CD8-positive, alpha-beta T cell (primary cell): ENCODE measurements at regions of chr6 and their contacts with region 1.

Region 1: DNA sequence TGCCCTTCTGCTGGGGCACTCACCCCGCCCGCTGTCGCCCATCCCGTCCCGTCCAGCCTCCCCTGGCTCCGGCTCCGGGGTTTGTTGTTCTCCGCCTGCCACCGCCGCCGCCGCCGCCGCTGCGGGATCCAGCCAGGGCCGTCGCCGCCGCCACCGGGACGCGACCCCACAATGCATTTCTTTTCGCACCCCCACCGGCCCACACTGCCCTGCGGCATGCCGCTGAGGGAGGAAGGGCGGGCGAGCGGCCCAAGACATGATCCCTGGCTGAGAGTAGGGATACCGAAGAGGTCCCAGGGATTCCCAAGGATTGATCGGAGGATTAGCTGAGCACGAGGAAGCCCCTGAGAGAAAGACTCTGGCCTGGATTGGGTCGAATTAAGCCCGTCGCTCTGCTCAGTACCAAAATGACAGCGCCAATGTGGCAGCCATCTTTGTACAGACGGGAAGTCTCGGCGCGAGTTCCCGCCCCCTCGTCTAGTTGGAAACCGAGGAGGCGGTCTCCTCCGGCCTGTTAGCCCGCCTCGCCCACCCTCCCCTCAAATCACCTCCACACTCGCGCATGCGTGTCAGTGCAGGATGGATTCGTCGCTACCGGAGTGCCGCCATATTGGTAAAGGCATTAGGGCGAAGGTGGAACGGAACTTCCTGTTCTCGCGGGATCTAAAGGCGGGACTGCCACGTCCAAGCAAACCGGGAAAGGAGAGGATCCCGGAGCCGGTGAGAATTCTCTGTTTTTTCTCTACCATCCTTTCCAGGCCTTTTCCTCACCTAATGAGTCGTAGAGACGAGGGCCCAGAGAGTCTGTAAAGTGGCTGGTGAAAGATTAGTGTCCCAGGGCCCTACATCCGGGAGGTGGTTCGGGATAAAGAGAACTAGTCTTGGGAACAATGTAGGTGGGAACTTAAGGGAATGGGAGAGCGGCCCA is at the starts of genes RXRB and SLC39A7:
- DNase-seq: peak; percentile 97 to 100 (median 99)
- ATAC-seq: peak; percentile 75
- H3K4me3 ChIP-seq: peak within 1 kb of the TSS; percentile 77 to 85
- H3K4me3 Mint-ChIP-seq: peak within 1 kb of the TSS; percentile 98
- H3K27ac ChIP-seq: peak within 1 kb of the TSS; percentile 89 to 94
- H3K27ac Mint-ChIP-seq: peak within 1 kb of the TSS; percentile 99
- H3K4me1 ChIP-seq: peaks cover 57% of the 10 kb centered on the region
- H3K4me1 Mint-ChIP-seq: peaks cover 78% of the 10 kb centered on the region
- H3K27me3 ChIP-seq: no peaks in the 10 kb centered on the region
- H3K27me3 Mint-ChIP-seq: no peaks in the 10 kb centered on the region
- CTCF ChIP-seq: no peak
- total RNA-seq, gene RXRB: 39.2 to 40.0 TPM
- total RNA-seq, gene SLC39A7: 9.7 to 11.0 TPM

Region 2: GRCh38 chr6:32195652-32195901 is 1004.9 kb before region 1 on chr6:
- CTCF ChIA-PET with region 1: no interaction called
- POLR2A ChIA-PET with region 1: no interaction called
- intact Hi-C with region 1: loop called in 1 of 2 experiments (anchors 10 kb)
- DNase-seq: peak; percentile 99 to 100 (median 100)
- ATAC-seq: peak; percentile 80
- H3K4me3 ChIP-seq: peak overlapping the region; percentile 85 to 87
- H3K4me3 Mint-ChIP-seq: peak overlapping the region; percentile 90
- H3K27ac ChIP-seq: peak overlapping the region; percentile 94 to 97
- H3K27ac Mint-ChIP-seq: peak overlapping the region; percentile 95
- H3K4me1 ChIP-seq: peaks cover 33% of the 10 kb centered on the region
- H3K4me1 Mint-ChIP-seq: peaks cover 35% of the 10 kb centered on the region
- H3K27me3 ChIP-seq: no peaks in the 10 kb centered on the region
- H3K27me3 Mint-ChIP-seq: no peaks in the 10 kb centered on the region
- CTCF ChIP-seq: peak; percentile 10

Region 3: DNA sequence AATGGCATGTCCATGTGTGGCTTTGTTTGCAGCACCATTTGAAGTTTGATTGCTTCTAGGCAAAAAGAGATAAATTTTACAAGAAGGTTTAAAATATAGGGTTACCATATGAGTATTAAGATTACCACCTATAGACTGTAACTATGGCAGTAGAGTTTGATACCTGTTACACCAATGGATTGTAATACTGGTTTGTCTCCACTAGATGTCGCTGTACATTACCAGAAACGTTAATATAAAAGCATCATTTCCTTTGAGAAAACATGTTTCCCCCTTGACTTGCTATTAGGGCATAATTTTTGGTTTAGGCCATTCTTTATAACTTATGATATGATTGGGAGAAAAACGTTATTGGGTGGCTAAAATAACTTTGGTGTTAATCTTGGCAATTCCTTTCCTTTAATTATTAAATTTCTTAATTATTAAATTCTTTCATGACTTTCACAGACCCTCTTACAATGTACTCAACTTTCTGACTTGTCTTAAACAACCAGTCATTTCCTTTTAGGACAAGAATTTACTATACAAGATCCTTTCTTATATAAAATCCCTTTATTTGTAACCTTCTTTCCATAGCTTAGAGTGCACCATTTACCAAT is 81.9 kb before region 1 on chr6:
- CTCF ChIA-PET with region 1: interaction called, 5 read pairs
- POLR2A ChIA-PET with region 1: no interaction called
- intact Hi-C with region 1: loop called in 1 of 2 experiments (anchors 5 kb)
- DNase-seq: peak in 3 of 9 experiments; percentile 30 to 83 (median 76)
- ATAC-seq: peak; percentile 84
- H3K4me3 ChIP-seq: no peak overlapping the region
- H3K4me3 Mint-ChIP-seq: no peak overlapping the region
- H3K27ac ChIP-seq: no peak overlapping the region
- H3K27ac Mint-ChIP-seq: no peak overlapping the region
- H3K4me1 ChIP-seq: no peaks in the 10 kb centered on the region
- H3K4me1 Mint-ChIP-seq: peaks cover 18% of the 10 kb centered on the region
- H3K27me3 ChIP-seq: peaks cover 20 to 22% of the 10 kb centered on the region in 2 experiments
- H3K27me3 Mint-ChIP-seq: peaks cover 46% of the 10 kb centered on the region
- CTCF ChIP-seq: peak; percentile 65

Region 4: GRCh38 chr6:33183071-33183683 is 17.3 kb before region 1 on chr6:
- CTCF ChIA-PET with region 1: interaction called, 5 read pairs
- POLR2A ChIA-PET with region 1: interaction called, 5 read pairs
- intact Hi-C with region 1: loop called in 1 of 2 experiments (anchors 1 kb)
- DNase-seq: peak in 2 of 9 experiments; percentile 34 to 53
- ATAC-seq: no peak
- H3K4me3 ChIP-seq: peak overlapping the region in 1 of 2 experiments; percentile 6
- H3K4me3 Mint-ChIP-seq: peak overlapping the region; percentile 52
- H3K27ac ChIP-seq: peak overlapping the region in 1 of 2 experiments; percentile 62
- H3K27ac Mint-ChIP-seq: peak overlapping the region; percentile 90
- H3K4me1 ChIP-seq: peaks cover 19% of the 10 kb centered on the region
- H3K4me1 Mint-ChIP-seq: peaks cover 23% of the 10 kb centered on the region
- H3K27me3 ChIP-seq: peaks cover 0 to 16% of the 10 kb centered on the region in 2 experiments
- H3K27me3 Mint-ChIP-seq: peaks cover 12% of the 10 kb centered on the region
- CTCF ChIP-seq: no peak

Region 5: DNA sequence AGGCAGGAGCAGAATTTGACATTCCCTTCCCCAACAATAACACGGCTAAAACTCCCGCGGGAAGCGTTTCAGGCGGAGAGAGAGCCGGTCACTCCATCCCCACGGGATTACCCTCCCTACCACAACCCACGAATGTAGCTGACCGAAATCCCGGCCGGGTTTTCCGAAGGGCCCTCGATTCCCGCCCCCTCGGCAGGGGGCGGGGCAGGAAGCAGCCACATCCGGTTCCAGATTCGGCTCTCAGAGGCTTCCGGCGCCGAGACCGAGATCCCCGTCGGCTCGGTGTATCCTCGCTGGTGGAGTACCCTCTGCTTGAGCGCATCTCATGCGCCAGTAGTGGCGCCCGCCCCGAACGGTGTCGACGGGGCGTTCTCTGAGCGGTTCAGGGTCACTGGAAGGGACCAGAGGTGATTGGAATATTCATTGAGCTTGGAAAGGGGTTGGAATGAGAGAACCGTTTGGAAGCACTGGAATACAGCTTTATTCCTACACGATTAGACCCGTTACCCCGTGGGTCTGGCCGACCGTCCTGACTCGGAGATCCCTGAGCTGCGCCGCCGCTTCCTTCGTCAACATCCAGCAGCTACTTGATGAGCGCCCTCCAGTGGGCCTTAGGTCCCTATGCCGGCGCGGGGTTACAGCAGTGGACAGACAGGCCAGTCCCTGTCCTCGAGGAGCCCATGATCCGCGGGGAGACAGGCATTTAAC is 98.9 kb after region 1 on chr6:
- CTCF ChIA-PET with region 1: no interaction called
- POLR2A ChIA-PET with region 1: no interaction called
- intact Hi-C with region 1: loop called (anchors 1 kb)
- DNase-seq: peak; percentile 82 to 97 (median 94)
- ATAC-seq: peak; percentile 83
- H3K4me3 ChIP-seq: peak overlapping the region; percentile 88 to 91
- H3K4me3 Mint-ChIP-seq: peak overlapping the region; percentile 99
- H3K27ac ChIP-seq: peak overlapping the region; percentile 83 to 96
- H3K27ac Mint-ChIP-seq: peak overlapping the region; percentile 99
- H3K4me1 ChIP-seq: peaks cover 14% of the 10 kb centered on the region
- H3K4me1 Mint-ChIP-seq: peaks cover 41% of the 10 kb centered on the region
- H3K27me3 ChIP-seq: no peaks in the 10 kb centered on the region
- H3K27me3 Mint-ChIP-seq: no peaks in the 10 kb centered on the region
- CTCF ChIP-seq: peak; percentile 70

Region 6: GRCh38 chr6:33323623-33323948 is 123.1 kb after region 1 on chr6:
- CTCF ChIA-PET with region 1: no interaction called
- POLR2A ChIA-PET with region 1: no interaction called
- intact Hi-C with region 1: loop called in 1 of 2 experiments (anchors 1 kb)
- DNase-seq: peak in 1 of 9 experiments; percentile 29
- ATAC-seq: no peak
- H3K4me3 ChIP-seq: peak overlapping the region; percentile 85 to 93
- H3K4me3 Mint-ChIP-seq: peak overlapping the region; percentile 96
- H3K27ac ChIP-seq: peak overlapping the region; percentile 83 to 91
- H3K27ac Mint-ChIP-seq: peak overlapping the region; percentile 94
- H3K4me1 ChIP-seq: peaks cover 43% of the 10 kb centered on the region
- H3K4me1 Mint-ChIP-seq: peaks cover 53% of the 10 kb centered on the region
- H3K27me3 ChIP-seq: no peaks in the 10 kb centered on the region
- H3K27me3 Mint-ChIP-seq: no peaks in the 10 kb centered on the region
- CTCF ChIP-seq: no peak

Region 7: GRCh38 chr6:33570806-33571636 is 370.5 kb after region 1 on chr6:
- CTCF ChIA-PET with region 1: no interaction called
- POLR2A ChIA-PET with region 1: no interaction called
- intact Hi-C with region 1: loop called in 1 of 2 experiments (anchors 5 kb)
- DNase-seq: peak; percentile 86 to 98 (median 92)
- ATAC-seq: peak; percentile 86
- H3K4me3 ChIP-seq: peak overlapping the region; percentile 57 to 67
- H3K4me3 Mint-ChIP-seq: peak overlapping the region; percentile 92
- H3K27ac ChIP-seq: peak overlapping the region; percentile 93 to 99
- H3K27ac Mint-ChIP-seq: peak overlapping the region; percentile 100
- H3K4me1 ChIP-seq: peaks cover 20% of the 10 kb centered on the region
- H3K4me1 Mint-ChIP-seq: peaks cover 29% of the 10 kb centered on the region
- H3K27me3 ChIP-seq: no peaks in the 10 kb centered on the region
- H3K27me3 Mint-ChIP-seq: no peaks in the 10 kb centered on the region
- CTCF ChIP-seq: no peak